Naive thymus-derived CD4-positive, alpha-beta T cell (primary cell): ENCODE measurements at regions of chr20 and their contacts with region 1.

Region 1: GRCh38 chr20:60491051-60491623 is 532.9 kb downstream of the CDH26 start:
- DNase-seq: no peak
- ATAC-seq: no peak
- H3K4me3 ChIP-seq: no peak overlapping the region
- H3K4me3 Mint-ChIP-seq: no peak overlapping the region
- H3K27ac ChIP-seq: no peak overlapping the region
- H3K27ac Mint-ChIP-seq: peak overlapping the region in 1 of 9 donors; percentile 28
- H3K4me1 ChIP-seq: no peaks in the 10 kb centered on the region
- H3K4me1 Mint-ChIP-seq: no peaks in the 10 kb centered on the region
- H3K27me3 ChIP-seq: no peaks in the 10 kb centered on the region
- H3K27me3 Mint-ChIP-seq: peaks cover 0 to 16% (median 0%) of the 10 kb centered on the region in 5 donors

Region 2: GRCh38 chr20:60512443-60512842 is 21.3 kb after region 1 on chr20:
- CTCF ChIA-PET with region 1: no interaction called
- POLR2A ChIA-PET with region 1: no interaction called
- intact Hi-C with region 1: loop called in 1 of 2 experiments (anchors 1 kb)
- DNase-seq: no peak
- ATAC-seq: no peak
- H3K4me3 ChIP-seq: no peak overlapping the region
- H3K4me3 Mint-ChIP-seq: no peak overlapping the region
- H3K27ac ChIP-seq: no peak overlapping the region
- H3K27ac Mint-ChIP-seq: no peak overlapping the region
- H3K4me1 ChIP-seq: no peaks in the 10 kb centered on the region
- H3K4me1 Mint-ChIP-seq: no peaks in the 10 kb centered on the region
- H3K27me3 ChIP-seq: no peaks in the 10 kb centered on the region
- H3K27me3 Mint-ChIP-seq: peaks cover 3 to 33% (median 20%) of the 10 kb centered on the region in 5 donors